Activated T-helper 1 cell treated with anti-CD3 and anti-CD28 coated beads, Interleukin-12 subunit alpha, Interleukin-12 subunit beta, Interleukin-2, Interleukin-4 antibody, amounts not matched to agents 30 ng/mL and 10 ng/mL and 1 ng/mL, durations not matched to agents 14 hours and 24 hours and 36 hours (primary cell): ENCODE measurements at regions of chrX and their contacts with region 1.

Region 1: GRCh38 chrX:66728818-66729271 is 90.0 kb upstream of the EDA2R start:
- DNase-seq: peak; percentile 19
- H3K4me3 Mint-ChIP-seq: peak overlapping the region; percentile 91
- H3K27ac Mint-ChIP-seq: peak overlapping the region; percentile 89
- H3K4me1 Mint-ChIP-seq: no peaks in the 10 kb centered on the region
- H3K27me3 Mint-ChIP-seq: peaks cover 2% of the 10 kb centered on the region

Region 2: GRCh38 chrX:64894454-64895038 is 1834.3 kb before region 1 on chrX:
- intact Hi-C with region 1: loop called (anchors 10 kb)
- DNase-seq: no peak
- H3K4me3 Mint-ChIP-seq: no peak overlapping the region
- H3K27ac Mint-ChIP-seq: peak overlapping the region; percentile 71
- H3K4me1 Mint-ChIP-seq: peaks cover 5% of the 10 kb centered on the region
- H3K27me3 Mint-ChIP-seq: no peaks in the 10 kb centered on the region

Region 3: DNA sequence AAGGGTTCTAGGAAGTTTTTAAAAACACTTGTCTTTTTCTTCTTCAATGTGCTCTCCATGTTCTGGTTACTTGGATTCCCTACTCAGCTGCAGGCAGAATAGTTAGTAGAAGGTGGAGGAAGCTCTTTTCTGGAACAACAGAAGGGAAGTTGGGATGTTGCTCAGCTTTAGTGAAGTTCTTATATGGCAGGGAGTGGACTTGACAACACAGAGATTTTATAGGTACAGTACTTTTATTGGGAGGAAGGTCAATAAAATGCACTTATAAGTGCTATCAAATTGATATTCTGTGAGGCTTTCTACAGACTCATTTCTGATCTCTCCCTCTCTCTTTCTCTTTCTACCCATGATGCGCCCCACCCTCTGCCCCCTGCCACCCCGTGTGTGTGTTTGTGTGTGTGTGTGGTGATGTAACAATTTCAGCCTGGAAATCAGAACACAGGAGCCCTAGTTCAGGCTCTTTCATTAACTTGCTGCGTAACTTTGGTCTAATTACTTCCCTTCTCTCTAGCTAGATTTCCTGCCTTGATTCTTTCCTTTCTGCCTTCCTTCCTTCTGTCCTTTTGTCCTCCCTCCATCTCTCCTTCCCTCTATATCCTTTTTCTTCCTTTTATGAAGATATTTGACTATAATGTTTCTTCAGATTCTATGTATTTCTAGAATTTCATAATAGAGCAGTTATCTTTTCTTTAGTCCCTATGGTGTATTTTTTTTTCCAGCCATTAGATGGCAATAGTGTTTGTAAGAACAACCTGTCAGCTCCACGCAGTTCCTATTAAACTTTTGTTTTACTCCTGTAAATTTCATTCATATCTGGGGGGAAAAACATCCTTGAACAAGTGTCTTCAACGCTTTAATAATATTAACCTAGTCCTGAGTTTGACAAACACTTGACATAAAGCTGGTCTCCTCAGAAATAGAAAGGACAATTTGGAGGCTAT is 527.7 kb before region 1 on chrX:
- intact Hi-C with region 1: loop called (anchors 1 kb)
- DNase-seq: no peak
- H3K4me3 Mint-ChIP-seq: no peak overlapping the region
- H3K27ac Mint-ChIP-seq: no peak overlapping the region
- H3K4me1 Mint-ChIP-seq: peaks cover 30% of the 10 kb centered on the region
- H3K27me3 Mint-ChIP-seq: peaks cover 9% of the 10 kb centered on the region

Region 4: GRCh38 chrX:66408507-66408906 is 320.3 kb before region 1 on chrX:
- intact Hi-C with region 1: loop called (anchors 10 kb)
- DNase-seq: no peak
- H3K4me3 Mint-ChIP-seq: no peak overlapping the region
- H3K27ac Mint-ChIP-seq: no peak overlapping the region
- H3K4me1 Mint-ChIP-seq: no peaks in the 10 kb centered on the region
- H3K27me3 Mint-ChIP-seq: peaks cover 8% of the 10 kb centered on the region